Activated CD4-positive, alpha-beta T cell treated with anti-CD3 and anti-CD28 coated beads for 36 hours (primary cell): ENCODE measurements at regions of chr1 and their contacts with region 1.

Region 1: DNA sequence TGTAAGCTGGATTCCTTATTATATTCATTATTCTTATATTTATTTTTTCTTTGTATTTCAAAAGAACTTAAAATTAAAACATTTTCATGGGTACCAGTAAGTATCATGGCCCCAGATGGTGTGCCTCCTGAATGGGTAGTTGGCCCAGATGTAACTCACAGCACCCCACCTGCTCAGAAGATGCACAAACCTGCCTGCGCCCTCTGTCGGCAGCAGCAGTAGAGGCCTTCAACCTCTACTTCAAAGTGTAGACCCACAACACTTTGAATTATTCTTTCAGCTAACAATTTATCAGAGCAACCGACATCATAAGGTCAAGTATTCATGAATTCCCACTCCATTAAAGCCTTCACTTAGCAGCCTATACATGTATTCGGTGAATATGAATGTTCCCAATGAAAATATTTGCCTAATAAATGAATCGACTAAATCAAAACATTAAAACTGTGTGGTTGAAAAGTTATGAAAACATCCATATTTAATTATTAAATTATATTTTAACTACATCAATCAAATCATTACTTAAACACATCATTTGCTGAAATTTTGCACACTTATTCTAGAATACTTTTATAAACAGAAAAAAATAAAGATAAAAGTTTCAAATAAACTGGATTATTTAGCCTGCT is 25.4 kb downstream of the PIGM start:
- DNase-seq: peak; percentile 88
- ATAC-seq: peak; percentile 90
- H3K4me3 Mint-ChIP-seq: no peak overlapping the region
- H3K27ac Mint-ChIP-seq: no peak overlapping the region
- H3K4me1 Mint-ChIP-seq: no peaks in the 10 kb centered on the region
- H3K27me3 Mint-ChIP-seq: peaks cover 11% of the 10 kb centered on the region

Region 2: GRCh38 chr1:159780583-159781582 is 225.5 kb before region 1 on chr1 and contains the start of gene DUSP23:
- CTCF ChIA-PET with region 1: interaction called, 4 read pairs
- POLR2A ChIA-PET with region 1: no interaction called
- intact Hi-C with region 1: loop called in 1 of 2 experiments (anchors 2 kb)
- DNase-seq: peak; percentile 97
- ATAC-seq: peak; percentile 99
- H3K4me3 Mint-ChIP-seq: peak within 1 kb of the TSS; percentile 70
- H3K27ac Mint-ChIP-seq: peak within 1 kb of the TSS; percentile 14
- H3K4me1 Mint-ChIP-seq: peaks cover 12% of the 10 kb centered on the region
- H3K27me3 Mint-ChIP-seq: peaks cover 2% of the 10 kb centered on the region
- total RNA-seq, gene DUSP23: 23.9 to 26.8 TPM

Region 3: GRCh38 chr1:159891275-159892157 is 114.9 kb before region 1 on chr1:
- CTCF ChIA-PET with region 1: interaction called, 18 read pairs
- POLR2A ChIA-PET with region 1: no interaction called
- intact Hi-C with region 1: loop called in 1 of 2 experiments (anchors 1 kb)
- DNase-seq: peak; percentile 88
- ATAC-seq: peak; percentile 98
- H3K4me3 Mint-ChIP-seq: no peak overlapping the region
- H3K27ac Mint-ChIP-seq: no peak overlapping the region
- H3K4me1 Mint-ChIP-seq: peaks cover 4% of the 10 kb centered on the region
- H3K27me3 Mint-ChIP-seq: no peaks in the 10 kb centered on the region

Region 4: GRCh38 chr1:159945483-159946241 is 60.8 kb before region 1 on chr1 and contains the start of gene IGSF9:
- CTCF ChIA-PET with region 1: interaction called, 237 read pairs
- POLR2A ChIA-PET with region 1: no interaction called
- intact Hi-C with region 1: no loop called
- DNase-seq: peak; percentile 75
- ATAC-seq: peak; percentile 92
- H3K4me3 Mint-ChIP-seq: peak within 1 kb of the TSS; percentile 35
- H3K27ac Mint-ChIP-seq: no peak within 1 kb of the TSS
- H3K4me1 Mint-ChIP-seq: peaks cover 7% of the 10 kb centered on the region
- H3K27me3 Mint-ChIP-seq: peaks cover 30% of the 10 kb centered on the region
- total RNA-seq, gene IGSF9: 0.07 TPM in 1 of 2 experiments, not detected in the other

Region 5: GRCh38 chr1:160018900-160019299 is 12.5 kb after region 1 on chr1:
- CTCF ChIA-PET with region 1: interaction called, 91 read pairs
- POLR2A ChIA-PET with region 1: no interaction called
- intact Hi-C with region 1: no loop called
- DNase-seq: peak; percentile 25
- ATAC-seq: peak; percentile 77
- H3K4me3 Mint-ChIP-seq: no peak overlapping the region
- H3K27ac Mint-ChIP-seq: no peak overlapping the region
- H3K4me1 Mint-ChIP-seq: peaks cover 5% of the 10 kb centered on the region
- H3K27me3 Mint-ChIP-seq: peaks cover 6% of the 10 kb centered on the region

Region 6: GRCh38 chr1:160046494-160047110 is 40.2 kb after region 1 on chr1:
- CTCF ChIA-PET with region 1: interaction called, 12 read pairs
- POLR2A ChIA-PET with region 1: no interaction called
- intact Hi-C with region 1: no loop called
- DNase-seq: peak; percentile 67
- ATAC-seq: peak; percentile 87
- H3K4me3 Mint-ChIP-seq: peak overlapping the region; percentile 55
- H3K27ac Mint-ChIP-seq: peak overlapping the region; percentile 81
- H3K4me1 Mint-ChIP-seq: peaks cover 12% of the 10 kb centered on the region
- H3K27me3 Mint-ChIP-seq: peaks cover 13% of the 10 kb centered on the region